Left colon (tissue), 2 donors: ENCODE measurements at regions of chr3 and their contacts with region 1.

Region 1: GRCh38 chr3:149494759-149495580 is 20.5 kb downstream of the TM4SF4 start:
- DNase-seq: no peak
- ATAC-seq: no peak

Region 2: DNA sequence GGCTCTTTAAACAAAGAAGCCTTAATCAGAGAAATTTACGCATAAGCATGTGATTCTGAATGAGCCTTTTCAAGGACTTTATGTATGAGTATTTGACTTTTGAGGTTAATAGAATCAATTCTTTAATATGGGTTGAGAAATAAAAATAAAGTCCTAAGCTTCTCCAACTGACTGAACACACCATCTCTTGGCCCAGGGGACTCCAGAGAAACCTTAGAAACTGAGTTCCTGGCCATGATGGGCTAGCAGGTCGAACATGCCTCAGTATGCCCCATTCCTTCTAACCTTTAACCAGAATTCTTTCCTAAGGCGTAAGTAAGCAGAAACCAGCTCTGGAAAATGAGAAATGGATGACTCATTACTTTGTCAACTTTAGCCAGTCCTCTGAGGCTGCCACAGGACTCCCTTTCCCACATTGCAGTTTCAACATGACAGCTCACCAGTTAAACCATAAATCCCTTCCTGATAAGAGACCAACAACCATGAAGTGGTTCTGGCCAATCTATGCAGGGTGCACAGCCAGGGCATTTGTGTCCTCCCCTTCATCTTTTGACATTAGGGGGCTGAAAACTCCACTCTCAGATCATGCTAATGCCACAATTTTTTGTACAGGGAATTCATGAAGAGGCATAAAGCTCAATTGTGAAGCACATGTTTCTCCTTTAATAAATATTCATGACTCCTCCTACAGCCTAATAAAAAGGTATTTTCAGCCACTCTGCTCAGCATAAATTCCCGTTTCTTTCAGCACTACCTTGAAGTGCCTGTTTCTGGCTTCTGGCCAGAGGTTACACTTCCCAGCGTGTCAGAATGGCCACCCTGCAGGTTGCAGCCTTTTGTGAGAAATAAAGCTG is 194.8 kb before region 1 on chr3:
- intact Hi-C with region 1: no loop called
- DNase-seq: peak; percentile 23 to 62
- ATAC-seq: peak; percentile 95

Region 3: DNA sequence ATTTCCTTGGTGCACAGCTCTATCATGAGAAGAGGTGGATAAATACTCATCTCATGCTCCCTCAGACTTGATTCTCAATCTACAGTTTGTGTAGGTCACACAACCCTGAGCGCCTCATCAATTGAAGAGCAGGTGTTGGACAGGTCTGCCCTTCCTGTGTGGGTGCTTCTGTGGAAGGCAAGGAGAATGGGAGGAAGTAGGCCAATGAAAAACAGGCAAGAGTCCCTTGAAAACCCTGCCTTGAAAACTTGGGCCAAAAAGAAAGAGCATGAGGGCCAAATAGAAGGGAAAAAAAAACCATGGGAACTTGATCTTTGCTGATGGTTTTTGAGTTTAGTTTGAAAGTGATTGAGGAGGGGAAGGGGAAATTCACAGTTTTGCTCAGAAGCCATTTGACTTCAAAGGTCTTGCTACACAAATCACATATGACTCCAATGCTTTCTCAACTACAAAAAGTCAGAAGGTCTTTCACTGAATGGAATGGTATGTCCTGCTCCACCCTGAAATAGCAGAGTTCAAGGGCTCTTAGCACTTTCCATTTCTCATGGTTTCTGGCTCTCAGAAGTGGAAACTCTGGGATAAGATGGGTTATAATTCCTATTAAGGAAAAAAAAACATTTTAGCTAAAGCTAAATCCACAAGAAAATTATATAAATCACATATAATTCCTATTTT is 80.3 kb before region 1 on chr3:
- intact Hi-C with region 1: no loop called
- DNase-seq: no peak
- ATAC-seq: no peak

Region 4: GRCh38 chr3:149547938-149548668 is 53.1 kb after region 1 on chr3:
- intact Hi-C with region 1: no loop called
- DNase-seq: peak in 1 of 2 donors; percentile 65
- ATAC-seq: peak; percentile 54

Region 5: GRCh38 chr3:149771652-149772271 is 276.8 kb after region 1 on chr3:
- intact Hi-C with region 1: loop called in 1 of 2 experiments (anchors 5 kb)
- DNase-seq: peak in 1 of 2 donors; percentile 58
- ATAC-seq: peak; percentile 40